Caco-2 (cell line): ENCODE measurements at regions of chr1 and their contacts with region 1.

Region 1: DNA sequence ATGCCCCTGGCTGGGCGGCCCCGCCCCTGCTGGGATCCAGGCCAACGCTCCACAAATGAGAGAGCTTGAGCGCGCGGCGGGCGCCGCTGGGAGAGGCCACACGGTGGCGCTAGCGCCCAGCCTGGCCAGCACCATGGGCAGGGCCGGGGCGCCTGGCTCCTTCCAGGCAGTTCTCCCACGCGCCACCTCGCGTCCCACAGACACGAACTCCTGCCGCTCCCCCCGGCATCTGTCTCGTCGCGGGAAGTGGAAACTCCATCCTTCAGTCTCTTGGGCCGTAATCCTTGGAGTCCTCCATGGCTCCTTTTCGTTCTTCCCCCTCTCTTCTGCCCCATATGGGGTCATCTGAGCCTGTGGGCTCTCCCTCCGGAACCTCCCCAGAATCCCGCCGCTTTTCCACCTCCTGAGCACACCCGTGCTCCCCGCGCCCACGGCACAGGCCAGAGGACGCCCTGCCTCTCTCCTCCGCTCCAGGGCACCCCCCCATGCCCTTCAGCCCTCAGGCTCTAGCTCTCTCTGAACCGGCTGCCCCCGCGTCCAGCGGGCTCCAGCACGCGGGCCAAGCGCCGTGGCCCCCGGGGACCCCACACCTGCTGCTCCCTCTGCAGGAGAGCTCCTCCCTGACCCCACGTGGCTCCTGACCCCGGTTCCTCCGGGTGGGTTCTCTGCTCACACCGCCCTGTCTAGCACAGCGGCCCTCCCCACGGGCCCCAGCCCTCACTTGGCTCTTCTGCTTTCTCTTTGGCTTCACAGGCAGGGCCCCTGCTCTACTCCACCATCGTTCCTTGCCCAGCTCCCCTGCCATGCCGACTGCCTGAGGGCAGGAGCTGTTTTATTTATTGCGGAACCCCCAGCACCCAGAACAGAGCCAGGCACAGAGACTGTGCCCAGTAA is 31.9 kb upstream of the EDN2 start:
- DNase-seq: peak; percentile 79 to 92
- H3K4me3 ChIP-seq: peak overlapping the region; percentile 15
- H3K4me3 Mint-ChIP-seq: peak overlapping the region; percentile 63
- H3K27ac Mint-ChIP-seq: no peak overlapping the region
- H3K4me1 ChIP-seq: peaks cover 32% of the 10 kb centered on the region
- H3K4me1 Mint-ChIP-seq: peaks cover 7% of the 10 kb centered on the region
- H3K27me3 ChIP-seq: no peaks in the 10 kb centered on the region
- H3K27me3 Mint-ChIP-seq: peaks cover 5% of the 10 kb centered on the region
- CTCF ChIP-seq: peak; percentile 68 to 76

Region 2: GRCh38 chr1:41268154-41268770 is 248.2 kb before region 1 on chr1:
- CTCF ChIA-PET with region 1: no interaction called
- POLR2A ChIA-PET with region 1: no interaction called
- intact Hi-C with region 1: loop called (anchors 10 kb)
- DNase-seq: peak; percentile 56 to 77
- H3K4me3 ChIP-seq: no peak overlapping the region
- H3K4me3 Mint-ChIP-seq: no peak overlapping the region
- H3K27ac Mint-ChIP-seq: no peak overlapping the region
- H3K4me1 ChIP-seq: no peaks in the 10 kb centered on the region
- H3K4me1 Mint-ChIP-seq: no peaks in the 10 kb centered on the region
- H3K27me3 ChIP-seq: no peaks in the 10 kb centered on the region
- H3K27me3 Mint-ChIP-seq: no peaks in the 10 kb centered on the region
- CTCF ChIP-seq: peak; percentile 85 to 86

Region 3: DNA sequence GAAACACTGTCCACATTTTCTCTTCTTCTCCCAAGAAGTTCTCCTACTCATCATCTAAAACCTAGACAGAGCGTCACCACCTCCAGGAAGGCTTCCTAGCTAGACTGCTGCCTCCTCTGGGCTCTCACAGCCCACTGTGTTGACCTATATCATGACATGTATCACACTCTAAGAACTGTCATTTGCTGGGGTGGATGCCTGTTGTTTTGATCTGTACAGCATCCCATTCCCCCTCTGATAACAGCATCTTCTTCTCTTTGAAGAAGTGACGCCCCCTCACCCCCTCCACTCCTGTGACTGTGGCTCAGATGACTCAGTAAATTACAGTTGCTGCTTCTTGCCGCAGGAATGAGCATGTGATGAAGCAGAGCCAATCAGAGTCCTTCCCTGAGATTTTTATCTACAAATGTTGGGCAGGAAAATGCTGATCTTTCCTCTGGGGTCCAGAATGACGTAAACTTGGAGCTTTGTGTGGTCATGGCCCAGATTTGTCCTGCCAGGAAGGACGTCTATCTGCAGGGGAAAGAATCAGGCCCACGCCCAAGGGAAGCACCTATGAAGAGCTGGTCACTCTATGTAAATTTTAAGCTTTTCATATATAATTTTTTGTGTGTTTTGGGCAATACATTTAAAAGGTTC is 183.2 kb before region 1 on chr1:
- CTCF ChIA-PET with region 1: no interaction called
- POLR2A ChIA-PET with region 1: no interaction called
- intact Hi-C with region 1: no loop called
- DNase-seq: no peak
- H3K4me3 ChIP-seq: no peak overlapping the region
- H3K4me3 Mint-ChIP-seq: no peak overlapping the region
- H3K27ac Mint-ChIP-seq: no peak overlapping the region
- H3K4me1 ChIP-seq: no peaks in the 10 kb centered on the region
- H3K4me1 Mint-ChIP-seq: no peaks in the 10 kb centered on the region
- H3K27me3 ChIP-seq: no peaks in the 10 kb centered on the region
- H3K27me3 Mint-ChIP-seq: no peaks in the 10 kb centered on the region
- CTCF ChIP-seq: no peak

Region 4: GRCh38 chr1:41496080-41497055 is 20.0 kb before region 1 on chr1:
- CTCF ChIA-PET with region 1: interaction called, 3 read pairs
- POLR2A ChIA-PET with region 1: interaction called, 4 read pairs
- intact Hi-C with region 1: loop called (anchors 1 kb)
- DNase-seq: peak; percentile 88 to 89
- H3K4me3 ChIP-seq: peak overlapping the region; percentile 35
- H3K4me3 Mint-ChIP-seq: peak overlapping the region; percentile 42
- H3K27ac Mint-ChIP-seq: peak overlapping the region; percentile 55
- H3K4me1 ChIP-seq: peaks cover 45% of the 10 kb centered on the region
- H3K4me1 Mint-ChIP-seq: no peaks in the 10 kb centered on the region
- H3K27me3 ChIP-seq: no peaks in the 10 kb centered on the region
- H3K27me3 Mint-ChIP-seq: no peaks in the 10 kb centered on the region
- CTCF ChIP-seq: no peak

Region 5: DNA sequence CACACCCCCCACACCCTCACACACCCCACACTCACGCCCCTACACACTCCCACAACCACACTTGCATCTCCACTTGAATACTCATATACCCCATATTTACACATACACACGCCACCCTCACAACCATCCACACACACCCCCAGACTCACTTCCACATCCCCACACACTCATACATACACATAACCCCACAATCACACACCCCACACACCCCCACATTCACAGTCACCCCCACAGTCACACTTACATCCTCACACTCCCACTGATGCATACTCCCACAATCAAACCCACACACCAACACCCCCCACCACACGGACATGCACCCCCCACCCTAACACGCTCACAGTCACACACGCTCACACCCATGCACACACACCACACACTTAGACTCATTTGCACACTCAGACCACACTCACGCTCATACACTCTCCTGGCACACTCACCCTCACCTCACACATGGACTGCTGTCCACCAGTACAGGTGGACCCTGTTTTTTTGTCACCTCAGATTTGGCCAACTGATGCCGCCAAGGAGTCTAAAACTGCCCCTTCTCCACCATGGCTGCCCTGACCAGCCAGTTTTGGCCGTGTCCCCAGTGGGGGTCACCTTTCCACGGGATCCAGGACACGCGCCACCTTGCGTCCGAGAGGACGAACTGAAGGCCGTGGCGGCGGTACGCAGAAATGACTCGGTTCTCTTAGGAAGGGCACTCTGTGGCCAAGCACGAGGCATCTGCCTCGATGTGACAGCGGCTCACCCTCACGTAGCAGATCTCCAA is 13.4 kb after region 1 on chr1:
- CTCF ChIA-PET with region 1: no interaction called
- POLR2A ChIA-PET with region 1: no interaction called
- intact Hi-C with region 1: no loop called
- DNase-seq: no peak
- H3K4me3 ChIP-seq: no peak overlapping the region
- H3K4me3 Mint-ChIP-seq: no peak overlapping the region
- H3K27ac Mint-ChIP-seq: no peak overlapping the region
- H3K4me1 ChIP-seq: no peaks in the 10 kb centered on the region
- H3K4me1 Mint-ChIP-seq: no peaks in the 10 kb centered on the region
- H3K27me3 ChIP-seq: no peaks in the 10 kb centered on the region
- H3K27me3 Mint-ChIP-seq: peaks cover 34% of the 10 kb centered on the region
- CTCF ChIP-seq: no peak

Region 6: GRCh38 chr1:41695118-41695745 is 178.8 kb after region 1 on chr1:
- CTCF ChIA-PET with region 1: no interaction called
- POLR2A ChIA-PET with region 1: no interaction called
- intact Hi-C with region 1: no loop called
- DNase-seq: no peak
- H3K4me3 ChIP-seq: no peak overlapping the region
- H3K4me3 Mint-ChIP-seq: no peak overlapping the region
- H3K27ac Mint-ChIP-seq: no peak overlapping the region
- H3K4me1 ChIP-seq: no peaks in the 10 kb centered on the region
- H3K4me1 Mint-ChIP-seq: no peaks in the 10 kb centered on the region
- H3K27me3 ChIP-seq: no peaks in the 10 kb centered on the region
- H3K27me3 Mint-ChIP-seq: peaks cover 6% of the 10 kb centered on the region
- CTCF ChIP-seq: no peak

Region 7: DNA sequence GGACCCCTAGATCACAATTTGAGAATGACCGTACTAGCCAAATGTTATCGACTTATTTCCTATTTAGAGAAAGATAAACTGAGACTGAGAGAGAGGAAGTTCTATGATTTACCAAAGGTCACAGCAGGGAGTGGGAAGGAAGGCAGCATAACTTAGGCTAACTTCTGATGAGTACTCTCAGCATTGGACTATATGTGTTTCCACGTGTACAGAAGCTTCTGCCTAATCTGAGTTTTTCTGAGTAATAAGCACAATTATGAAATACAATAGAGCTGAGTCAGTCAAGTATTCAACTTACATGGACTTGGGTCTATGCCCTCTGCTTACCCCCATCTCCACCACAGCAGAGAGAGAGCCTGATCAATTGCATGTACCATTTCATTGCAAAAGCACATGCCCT is 490.4 kb after region 1 on chr1:
- CTCF ChIA-PET with region 1: no interaction called
- POLR2A ChIA-PET with region 1: no interaction called
- intact Hi-C with region 1: no loop called
- DNase-seq: no peak
- H3K4me3 ChIP-seq: no peak overlapping the region
- H3K4me3 Mint-ChIP-seq: no peak overlapping the region
- H3K27ac Mint-ChIP-seq: no peak overlapping the region
- H3K4me1 ChIP-seq: no peaks in the 10 kb centered on the region
- H3K4me1 Mint-ChIP-seq: no peaks in the 10 kb centered on the region
- H3K27me3 ChIP-seq: no peaks in the 10 kb centered on the region
- H3K27me3 Mint-ChIP-seq: peaks cover 16% of the 10 kb centered on the region
- CTCF ChIP-seq: no peak